ENCODE measurements at regions of chr6 and their contacts with region 1.

Region 1: GRCh38 chr6:43174263-43175112 is 3.4 kb downstream of the SRF start:
- DNase-seq: peak; percentile 96
- H3K4me3 Mint-ChIP-seq: peak overlapping the region; percentile 99
- H3K27ac Mint-ChIP-seq: peak overlapping the region; percentile 64
- H3K4me1 Mint-ChIP-seq: peaks cover 40% of the 10 kb centered on the region
- H3K27me3 Mint-ChIP-seq: no peaks in the 10 kb centered on the region

Region 2: DNA sequence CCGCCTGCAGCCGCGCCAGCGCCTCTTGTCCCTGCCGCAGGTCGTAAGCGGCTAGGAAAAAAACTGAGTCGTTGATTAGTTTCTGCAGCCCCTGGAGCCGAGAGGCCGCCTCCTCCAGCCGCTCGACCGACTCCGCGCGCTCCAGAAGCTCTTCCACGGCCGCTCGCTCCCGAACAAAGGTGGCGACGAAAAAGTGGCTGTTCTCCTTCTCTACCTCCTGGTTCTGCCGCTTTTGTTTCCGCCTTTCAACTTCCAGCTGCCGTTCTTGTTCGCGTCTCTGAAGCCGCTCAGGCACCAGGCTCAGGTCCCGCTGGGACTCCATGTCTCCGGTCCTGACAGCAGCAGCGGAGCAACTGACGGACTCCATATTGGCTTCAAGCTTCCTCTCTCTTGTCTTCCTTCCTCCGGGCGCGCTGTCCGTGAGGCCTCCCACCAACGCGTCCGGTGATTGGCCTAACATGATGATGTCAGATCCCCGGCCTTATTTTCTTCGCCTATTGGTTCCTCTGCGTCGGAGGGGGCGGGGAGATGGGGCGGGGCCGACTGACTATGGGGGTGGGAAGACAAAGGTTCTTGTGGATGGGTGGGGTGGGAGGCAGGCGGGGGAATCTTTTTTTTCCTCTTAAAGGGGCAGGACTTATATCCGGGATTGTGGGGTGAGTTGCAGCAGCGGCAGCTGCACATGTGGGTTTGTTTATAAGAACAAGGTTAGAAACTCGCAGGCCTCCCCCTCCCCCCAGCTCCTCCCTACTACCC is 428.6 kb before region 1 on chr6 and contains the start of gene TBCC:
- intact Hi-C with region 1: loop called (anchors 5 kb)
- DNase-seq: peak; percentile 92
- H3K4me3 Mint-ChIP-seq: peak within 1 kb of the TSS; percentile 100
- H3K27ac Mint-ChIP-seq: peak within 1 kb of the TSS; percentile 100
- H3K4me1 Mint-ChIP-seq: peaks cover 24% of the 10 kb centered on the region
- H3K27me3 Mint-ChIP-seq: no peaks in the 10 kb centered on the region
- total RNA-seq, gene TBCC: 17.7 and 19.5 TPM in 2 replicates

Region 3: GRCh38 chr6:42928986-42929820 is 245.3 kb before region 1 on chr6 and contains the start of gene CNPY3:
- intact Hi-C with region 1: loop called (anchors 2 kb)
- DNase-seq: peak; percentile 96
- H3K4me3 Mint-ChIP-seq: peak within 1 kb of the TSS; percentile 96
- H3K27ac Mint-ChIP-seq: peak within 1 kb of the TSS; percentile 91
- H3K4me1 Mint-ChIP-seq: peaks cover 34% of the 10 kb centered on the region
- H3K27me3 Mint-ChIP-seq: no peaks in the 10 kb centered on the region
- total RNA-seq, gene CNPY3: 51.3 and 53.1 TPM in 2 replicates

Region 4: GRCh38 chr6:43013843-43014433 is 160.6 kb before region 1 on chr6 and contains the starts of genes KLHDC3 and MEA1:
- intact Hi-C with region 1: loop called (anchors 1 kb)
- DNase-seq: peak; percentile 99
- H3K4me3 Mint-ChIP-seq: peak within 1 kb of the TSS; percentile 96
- H3K27ac Mint-ChIP-seq: peak within 1 kb of the TSS; percentile 74
- H3K4me1 Mint-ChIP-seq: peaks cover 35% of the 10 kb centered on the region
- H3K27me3 Mint-ChIP-seq: no peaks in the 10 kb centered on the region
- total RNA-seq, gene KLHDC3: 71.2 and 74.6 TPM in 2 replicates
- total RNA-seq, gene MEA1: 90.9 and 91.2 TPM in 2 replicates

Region 5: DNA sequence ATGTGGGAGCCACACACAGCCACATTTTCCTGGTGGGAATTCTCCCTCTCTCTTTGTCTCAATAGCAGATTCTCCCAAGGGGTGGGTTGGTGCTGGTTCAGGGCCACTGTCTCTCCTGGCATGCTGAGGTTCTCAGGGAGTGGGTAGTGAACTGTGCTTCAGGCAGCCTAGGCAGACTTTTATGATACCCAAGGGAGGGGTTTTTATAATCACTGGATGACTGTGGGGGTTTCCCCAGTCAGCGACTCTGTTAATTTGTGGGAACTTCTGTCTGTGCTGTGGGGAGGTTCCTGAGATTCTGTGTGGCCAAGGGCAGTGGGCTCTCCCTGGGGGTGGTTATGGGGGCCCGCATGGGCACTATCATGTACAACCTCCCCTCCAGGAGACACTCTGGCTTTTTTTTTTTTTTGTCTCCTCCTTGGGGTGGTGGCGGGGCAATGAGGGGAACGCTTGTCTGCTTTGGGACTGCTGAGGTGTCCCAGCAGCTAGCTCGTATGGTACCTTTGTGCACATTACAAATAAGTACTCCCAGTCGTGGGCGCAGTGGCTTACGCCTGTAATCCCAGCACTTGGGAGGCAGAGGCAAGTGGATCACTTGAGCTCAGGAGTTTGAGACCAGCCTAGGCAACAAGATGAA is 88.3 kb before region 1 on chr6:
- intact Hi-C with region 1: no loop called
- DNase-seq: no peak
- H3K4me3 Mint-ChIP-seq: no peak overlapping the region
- H3K27ac Mint-ChIP-seq: no peak overlapping the region
- H3K4me1 Mint-ChIP-seq: peaks cover 9% of the 10 kb centered on the region
- H3K27me3 Mint-ChIP-seq: peaks cover 8% of the 10 kb centered on the region

Region 6: DNA sequence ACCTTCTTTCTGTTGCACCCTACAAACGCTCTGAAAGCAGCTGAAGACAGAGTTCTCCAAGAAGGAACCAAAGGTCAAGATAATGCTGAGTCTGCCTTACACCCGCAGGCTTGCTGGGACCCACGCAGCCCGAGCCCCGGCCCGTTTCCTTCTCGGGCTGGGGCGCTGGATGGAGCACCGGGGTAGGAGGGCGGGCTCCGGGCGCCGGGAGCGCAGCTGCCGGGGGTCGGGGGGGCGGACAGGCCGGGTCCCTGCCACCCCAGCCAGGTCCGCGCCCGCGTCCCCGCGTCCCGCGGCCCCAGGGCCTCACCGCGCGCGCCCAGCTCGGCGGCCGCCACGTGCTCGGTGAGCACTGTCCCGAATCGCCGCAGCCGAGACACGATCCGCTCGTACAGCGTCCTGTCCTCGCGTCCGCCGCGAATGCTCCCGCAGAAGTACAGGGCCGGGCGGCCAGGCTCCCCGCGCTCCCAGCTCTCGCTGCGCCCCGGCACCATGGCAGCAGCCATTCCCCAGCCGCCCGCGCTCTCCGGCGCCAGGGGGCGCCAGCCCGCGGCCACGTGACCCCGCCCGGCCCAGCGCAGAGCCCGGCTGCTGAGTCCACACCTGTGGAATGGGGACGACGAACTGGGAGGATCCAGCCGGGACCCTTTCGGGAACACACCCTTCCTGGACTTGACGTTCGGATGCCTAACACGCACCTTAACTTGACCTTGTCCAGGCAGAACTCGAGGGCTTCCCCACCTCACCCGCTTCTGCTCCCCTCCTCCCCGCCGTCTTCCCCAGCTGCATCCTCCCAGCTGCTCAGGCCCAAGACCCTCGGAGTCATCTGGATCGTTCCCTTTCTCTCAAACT is 54.7 kb after region 1 on chr6 and contains the start of gene DNPH1:
- intact Hi-C with region 1: loop called (anchors 2 kb)
- DNase-seq: peak; percentile 77
- H3K4me3 Mint-ChIP-seq: peak within 1 kb of the TSS; percentile 88
- H3K27ac Mint-ChIP-seq: peak within 1 kb of the TSS; percentile 92
- H3K4me1 Mint-ChIP-seq: peaks cover 24% of the 10 kb centered on the region
- H3K27me3 Mint-ChIP-seq: peaks cover 16% of the 10 kb centered on the region
- total RNA-seq, gene DNPH1: 70.5 and 76.7 TPM in 2 replicates

Region 7: DNA sequence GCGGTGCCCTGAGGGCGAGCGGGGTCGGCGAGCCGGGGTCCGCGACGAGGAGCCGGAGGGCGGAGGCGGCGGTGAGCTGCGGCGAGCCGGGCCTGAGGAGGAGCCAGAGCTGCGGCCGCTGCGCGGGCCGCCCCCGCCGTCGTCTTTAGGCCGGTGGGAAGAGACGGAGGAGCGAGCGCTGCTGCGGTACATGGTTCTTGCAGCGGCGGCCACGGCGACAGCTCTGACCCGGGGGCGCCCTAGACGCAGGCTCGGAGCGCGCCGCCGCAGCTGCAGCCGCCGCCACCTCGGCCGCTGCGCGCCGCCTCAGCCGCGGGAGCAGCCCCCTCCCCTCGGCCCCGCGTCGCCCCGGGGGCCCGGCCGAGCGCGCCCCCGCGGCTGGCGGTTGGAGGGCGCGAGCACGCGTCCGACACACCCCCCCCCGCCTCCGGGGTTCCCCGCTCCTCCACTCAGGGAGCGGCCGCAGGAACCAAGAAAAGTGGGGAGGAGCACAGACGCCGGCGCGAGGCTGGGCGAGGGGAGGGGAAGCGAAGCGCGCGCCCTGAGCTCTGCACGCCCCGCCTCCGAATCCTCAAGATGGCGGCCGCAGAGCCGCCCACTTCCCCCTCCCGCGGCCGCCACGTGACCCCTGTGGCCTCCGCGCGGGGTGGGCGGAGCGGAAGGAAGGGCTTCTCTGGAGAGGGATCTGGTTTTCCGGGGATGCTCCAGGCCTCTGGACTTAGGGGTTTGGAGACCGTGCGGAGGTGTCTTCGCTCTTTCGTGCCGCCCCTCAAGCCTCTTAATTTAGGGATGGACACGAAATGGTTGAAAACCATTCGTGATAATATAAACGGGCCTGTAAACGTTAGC is 194.9 kb after region 1 on chr6 and contains the start of gene ZNF318:
- intact Hi-C with region 1: loop called (anchors 5 kb)
- DNase-seq: peak; percentile 93
- H3K4me3 Mint-ChIP-seq: peak within 1 kb of the TSS; percentile 82
- H3K27ac Mint-ChIP-seq: peak within 1 kb of the TSS; percentile 91
- H3K4me1 Mint-ChIP-seq: peaks cover 31% of the 10 kb centered on the region
- H3K27me3 Mint-ChIP-seq: peaks cover 6% of the 10 kb centered on the region
- total RNA-seq, gene ZNF318: 11.5 and 13.2 TPM in 2 replicates

Measured in activated T-helper 2 cell treated with anti-CD3 and anti-CD28 coated beads, Interferon-gamma antibody, Interleukin-2, Interleukin-4, amounts not matched to agents 10 μg/mL and 5 μg/mL and 100 μg/mL, durations not matched to agents 14 hours and 24 hours and 36 hours (primary cell).